Esophagus muscularis mucosa (tissue), 4 donors: ENCODE measurements at regions of chr6 and their contacts with region 1.

Region 1: GRCh38 chr6:36196880-36197548 is 470 bp downstream of the BRPF3 start:
- DNase-seq: peak; percentile 99
- H3K4me3 ChIP-seq: peak overlapping the region; percentile 87 to 95 (median 90)
- H3K27ac ChIP-seq: peak overlapping the region; percentile 96 to 99 (median 98)
- H3K4me1 ChIP-seq: peaks cover 14 to 51% (median 35%) of the 10 kb centered on the region in 4 donors
- H3K27me3 ChIP-seq: no peaks in the 10 kb centered on the region
- CTCF ChIP-seq: no peak
- EP300 ChIP-seq: no peak
- POLR2A ChIP-seq: peak; percentile 44

Region 2: GRCh38 chr6:36027501-36028087 is 169.4 kb before region 1 on chr6 and contains the start of gene MAPK14:
- intact Hi-C with region 1: loop called (anchors 5 kb)
- DNase-seq: peak; percentile 100
- H3K4me3 ChIP-seq: peak within 1 kb of the TSS; percentile 83 to 96 (median 95)
- H3K27ac ChIP-seq: peak within 1 kb of the TSS; percentile 92 to 96 (median 94)
- H3K4me1 ChIP-seq: peaks cover 13 to 44% (median 41%) of the 10 kb centered on the region in 4 donors
- H3K27me3 ChIP-seq: peaks cover 0 to 13% (median 5%) of the 10 kb centered on the region in 4 donors
- CTCF ChIP-seq: peak; percentile 91 to 99 (median 95)
- EP300 ChIP-seq: no peak
- POLR2A ChIP-seq: peak; percentile 92
- total RNA-seq, gene MAPK14: 53.2 to 70.7 (median 66.9) TPM

Region 3: GRCh38 chr6:36094753-36095496 is 102.1 kb before region 1 on chr6:
- intact Hi-C with region 1: loop called (anchors 10 kb)
- DNase-seq: peak; percentile 96
- H3K4me3 ChIP-seq: no peak overlapping the region
- H3K27ac ChIP-seq: peak overlapping the region; percentile 3 to 69 (median 36)
- H3K4me1 ChIP-seq: peaks cover 17 to 31% (median 30%) of the 10 kb centered on the region in 4 donors
- H3K27me3 ChIP-seq: no peaks in the 10 kb centered on the region
- CTCF ChIP-seq: peak; percentile 96 to 97 (median 96)
- EP300 ChIP-seq: no peak
- POLR2A ChIP-seq: no peak

Region 4: DNA sequence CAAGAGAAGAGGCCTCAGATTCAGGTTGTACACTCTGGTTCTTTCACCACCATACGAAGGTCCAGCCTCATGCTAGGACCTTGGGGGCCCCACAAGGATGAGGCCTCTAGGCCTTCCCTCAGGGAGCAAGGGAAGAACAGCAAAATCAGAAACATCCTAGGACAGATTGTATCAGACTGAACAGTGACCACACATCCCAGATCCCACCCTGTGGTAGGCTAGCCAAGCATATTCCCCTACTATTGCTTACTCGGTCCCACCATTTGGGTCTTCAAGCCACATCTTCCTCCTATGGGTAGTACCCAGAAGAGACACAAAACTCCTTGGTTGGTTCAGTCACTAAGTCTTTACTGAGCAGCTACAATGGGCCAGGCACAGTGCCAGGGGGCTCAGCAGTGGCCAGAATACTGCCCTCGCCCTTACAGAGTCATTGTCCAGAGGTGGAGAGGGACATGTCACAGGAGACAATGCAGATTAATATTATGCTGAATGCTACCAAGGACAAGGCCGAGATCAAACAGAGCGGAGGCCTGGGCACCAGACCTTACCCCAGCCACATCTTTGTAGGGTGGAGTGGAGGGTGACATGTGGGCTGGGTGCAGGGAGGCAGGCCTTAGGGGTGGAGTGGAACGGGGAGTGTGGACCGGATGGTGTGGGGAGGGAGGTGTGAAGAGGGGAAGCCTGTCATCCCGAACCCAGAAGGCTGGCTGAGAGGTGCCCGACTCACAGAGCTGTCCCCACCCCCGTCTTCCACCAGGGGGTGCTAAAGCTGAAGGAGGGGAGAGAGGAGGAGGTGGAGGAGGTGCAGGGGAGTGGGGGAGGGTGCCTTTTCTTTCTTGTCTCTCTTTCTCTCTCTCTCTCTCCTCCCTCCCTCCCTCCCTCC is 73.5 kb before region 1 on chr6:
- intact Hi-C with region 1: loop called (anchors 1 kb)
- DNase-seq: peak; percentile 96
- H3K4me3 ChIP-seq: peak overlapping the region in 2 of 4 donors; percentile 18 to 21
- H3K27ac ChIP-seq: no peak overlapping the region
- H3K4me1 ChIP-seq: peaks cover 20 to 30% (median 29%) of the 10 kb centered on the region in 4 donors
- H3K27me3 ChIP-seq: peaks cover 0 to 22% (median 0%) of the 10 kb centered on the region in 4 donors
- CTCF ChIP-seq: peak; percentile 69 to 84 (median 76)
- EP300 ChIP-seq: no peak
- POLR2A ChIP-seq: no peak